Pancreas (tissue), 10 donors: ENCODE measurements at regions of chr1 and their contacts with region 1.

Region 1: GRCh38 chr1:161192476-161193465 is 6.1 kb downstream of the ADAMTS4 start:
- DNase-seq: peak in 3 of 6 donors; percentile 41 to 66 (median 57)
- ATAC-seq: peak; percentile 73 to 89 (median 82)
- H3K4me3 ChIP-seq: no peak overlapping the region
- H3K27ac ChIP-seq: no peak overlapping the region
- H3K4me1 ChIP-seq: no peaks in the 10 kb centered on the region
- H3K27me3 ChIP-seq: no peaks in the 10 kb centered on the region
- CTCF ChIP-seq: peak; percentile 61 to 88 (median 76)

Region 2: DNA sequence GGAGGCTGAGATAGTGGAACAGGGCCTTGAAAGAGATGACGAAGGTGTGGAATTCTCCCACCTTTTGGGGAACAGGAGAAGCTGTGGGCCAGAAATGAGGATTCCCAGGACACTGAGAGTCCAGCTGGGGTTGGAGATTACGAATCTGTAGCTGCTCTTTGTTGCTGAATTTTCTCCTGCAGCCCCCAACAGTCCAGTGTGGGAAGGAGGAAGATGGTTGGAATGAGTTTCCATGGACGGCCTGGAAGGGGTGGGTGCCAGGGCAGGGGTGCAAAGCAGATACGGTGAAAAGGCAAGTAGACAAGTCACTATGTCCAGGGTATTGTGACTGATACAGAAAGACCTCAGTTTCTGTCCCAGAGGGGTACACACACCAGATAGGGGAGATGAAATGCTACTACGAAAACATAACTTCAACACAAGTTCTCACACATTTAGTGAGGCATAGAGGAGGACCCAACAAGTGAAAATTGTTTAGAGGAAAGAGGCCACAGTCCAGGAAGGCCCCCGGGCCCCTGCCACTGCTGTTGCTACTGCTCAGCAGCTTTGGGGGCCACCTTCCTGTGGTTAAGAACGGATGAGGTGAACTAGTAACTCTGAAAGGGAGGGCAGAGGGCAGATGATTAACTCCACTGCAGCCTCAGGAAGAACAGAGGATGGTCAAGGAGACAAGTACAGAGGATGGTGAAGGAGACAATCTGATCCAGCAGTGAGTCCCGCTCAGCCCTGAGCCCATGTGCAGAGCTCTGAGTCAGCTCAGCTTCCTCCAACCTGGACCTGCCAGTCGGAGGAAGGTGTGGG is 337.4 kb before region 1 on chr1:
- intact Hi-C with region 1: no loop called
- DNase-seq: no peak
- ATAC-seq: no peak
- H3K4me3 ChIP-seq: no peak overlapping the region
- H3K27ac ChIP-seq: no peak overlapping the region
- H3K4me1 ChIP-seq: no peaks in the 10 kb centered on the region
- H3K27me3 ChIP-seq: no peaks in the 10 kb centered on the region
- CTCF ChIP-seq: no peak

Region 3: GRCh38 chr1:161287482-161288054 is 94.8 kb after region 1 on chr1:
- intact Hi-C with region 1: no loop called
- DNase-seq: no peak
- ATAC-seq: no peak
- H3K4me3 ChIP-seq: no peak overlapping the region
- H3K27ac ChIP-seq: no peak overlapping the region
- H3K4me1 ChIP-seq: no peaks in the 10 kb centered on the region
- H3K27me3 ChIP-seq: no peaks in the 10 kb centered on the region
- CTCF ChIP-seq: no peak

Region 4: DNA sequence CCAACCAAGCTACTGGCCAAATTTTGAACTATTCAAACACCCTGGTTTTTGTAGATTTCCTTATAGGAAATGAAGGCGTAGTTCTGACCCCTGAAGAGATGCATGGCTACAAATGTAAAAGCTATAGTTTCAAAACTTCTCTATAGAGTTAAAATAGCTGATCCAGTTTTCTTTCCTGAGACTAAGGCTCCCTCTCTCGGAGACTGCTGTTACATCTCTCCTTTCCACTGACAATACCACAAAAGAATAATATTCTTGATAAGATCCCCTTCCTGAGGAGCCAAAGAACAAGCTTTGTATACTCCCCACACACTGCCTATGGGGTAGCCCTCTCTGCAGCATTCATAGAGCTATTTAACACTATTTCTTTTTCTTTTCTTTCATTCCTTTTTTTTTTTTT is 181.6 kb after region 1 on chr1:
- intact Hi-C with region 1: loop called in 1 of 3 experiments (anchors 10 kb)
- DNase-seq: no peak
- ATAC-seq: peak in 1 of 4 donors; percentile 25
- H3K4me3 ChIP-seq: no peak overlapping the region
- H3K27ac ChIP-seq: no peak overlapping the region
- H3K4me1 ChIP-seq: peaks cover 0 to 5% (median 0%) of the 10 kb centered on the region in 3 donors
- H3K27me3 ChIP-seq: no peaks in the 10 kb centered on the region
- CTCF ChIP-seq: no peak

Region 5: DNA sequence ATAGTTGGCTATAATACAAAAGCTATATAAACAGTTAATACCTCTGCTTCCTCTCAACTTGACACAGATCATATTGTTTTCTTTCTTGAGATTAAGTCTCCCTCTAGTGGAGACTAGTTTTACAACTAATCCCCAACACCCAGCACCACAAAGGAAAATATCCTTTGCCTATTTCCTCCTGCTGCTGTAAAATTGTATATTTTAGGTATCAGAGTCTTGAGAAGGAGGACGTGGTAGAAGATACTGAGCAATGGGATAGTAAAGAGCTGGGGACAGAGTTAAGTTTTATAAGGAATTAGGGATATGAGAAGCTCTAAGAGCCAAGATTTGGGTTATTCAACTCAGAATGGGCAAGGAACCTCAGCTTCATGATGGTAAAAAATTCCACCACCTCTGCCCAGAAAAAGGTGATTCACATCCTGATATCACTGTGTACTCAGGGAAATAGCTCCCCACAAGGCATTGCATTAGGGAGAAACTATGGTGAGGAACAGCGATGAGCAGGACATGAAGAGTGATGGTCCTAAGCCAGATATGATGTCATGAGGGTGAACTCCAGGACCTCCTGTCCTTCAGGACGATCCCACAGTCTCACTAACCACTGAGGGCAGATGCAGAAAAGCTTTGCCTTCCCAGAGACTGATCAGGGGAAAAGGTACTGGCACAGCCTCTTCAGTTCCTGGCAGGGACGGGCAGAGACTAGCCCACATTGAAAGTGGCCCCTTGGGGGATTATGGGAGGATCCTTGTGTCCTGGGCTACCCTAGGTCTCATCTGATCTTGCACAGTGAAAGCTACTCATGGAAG is 189.6 kb after region 1 on chr1:
- intact Hi-C with region 1: loop called in 2 of 3 experiments (anchors 5 to 10 kb)
- DNase-seq: no peak
- ATAC-seq: peak; percentile 73 to 88 (median 87)
- H3K4me3 ChIP-seq: no peak overlapping the region
- H3K27ac ChIP-seq: peak overlapping the region in 2 of 4 donors; percentile 27 to 59
- H3K4me1 ChIP-seq: peaks cover 0 to 19% (median 0%) of the 10 kb centered on the region in 3 donors
- H3K27me3 ChIP-seq: no peaks in the 10 kb centered on the region
- CTCF ChIP-seq: peak in 3 of 4 donors; percentile 36 to 62 (median 61)